ENCODE measurements at regions of chr17 and their contacts with region 1.

Region 1: DNA sequence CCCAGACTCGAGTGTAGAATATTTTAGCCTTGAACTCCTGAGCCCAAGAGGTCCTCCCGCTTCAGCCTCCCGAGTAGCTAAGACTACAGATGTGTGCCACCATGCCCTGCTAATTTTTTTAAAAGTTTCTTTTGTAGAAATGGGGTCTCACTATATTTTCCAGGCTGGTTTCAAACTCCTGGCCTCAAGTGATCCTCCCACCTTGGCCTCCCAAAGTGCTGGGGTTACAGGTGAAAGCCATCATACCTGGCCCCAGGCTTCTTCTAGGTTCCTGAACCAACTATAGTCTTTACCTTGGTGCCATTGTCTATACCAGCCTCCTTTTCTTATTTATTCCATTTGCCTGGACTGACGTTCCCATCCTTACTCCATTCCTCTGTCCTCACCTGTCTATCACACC is 17.1 kb upstream of the PRKAR1A start:
- DNase-seq: no peak
- ATAC-seq: no peak
- H3K4me3 ChIP-seq: no peak overlapping the region
- H3K27ac ChIP-seq: no peak overlapping the region
- H3K4me1 ChIP-seq: peaks cover 0 to 9% of the 10 kb centered on the region in 2 experiments; a peak in 2 of 4 replicates
- H3K27me3 ChIP-seq: no peaks in the 10 kb centered on the region
- CTCF ChIP-seq: no peak
- POLR2A ChIP-seq: no peak
- RAD21 ChIP-seq: no peak

Region 2: DNA sequence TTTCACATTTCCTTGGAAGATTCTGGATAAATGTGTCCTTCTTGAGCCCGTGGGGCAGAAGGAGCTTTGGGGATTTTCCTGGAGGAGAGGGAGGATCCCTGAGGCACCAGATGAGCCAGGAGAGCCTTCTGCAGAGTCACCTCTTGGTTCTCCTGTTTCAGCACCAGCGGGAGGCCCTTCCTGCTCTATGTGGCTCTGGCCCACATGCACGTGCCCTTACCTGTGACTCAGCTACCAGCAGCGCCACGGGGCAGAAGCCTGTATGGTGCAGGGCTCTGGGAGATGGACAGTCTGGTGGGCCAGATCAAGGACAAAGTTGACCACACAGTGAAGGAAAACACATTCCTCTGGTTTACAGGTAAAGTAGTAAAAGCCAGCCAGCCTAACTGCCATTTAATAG is 126.7 kb before region 1 on chr17:
- CTCF ChIA-PET with region 1: no interaction called
- POLR2A ChIA-PET with region 1: no interaction called
- RAD21 ChIA-PET with region 1: no interaction called
- intact Hi-C with region 1: no loop called
- DNase-seq: no peak
- ATAC-seq: peak; percentile 59
- H3K4me3 ChIP-seq: no peak overlapping the region
- H3K27ac ChIP-seq: no peak overlapping the region
- H3K4me1 ChIP-seq: peaks cover 0 to 8% of the 10 kb centered on the region in 2 experiments; a peak in 1 of 4 replicates
- H3K27me3 ChIP-seq: no peaks in the 10 kb centered on the region
- CTCF ChIP-seq: no peak
- POLR2A ChIP-seq: no peak
- RAD21 ChIP-seq: no peak

Region 3: GRCh38 chr17:68391561-68392268 is 103.4 kb before region 1 on chr17:
- CTCF ChIA-PET with region 1: no interaction called
- POLR2A ChIA-PET with region 1: no interaction called
- RAD21 ChIA-PET with region 1: no interaction called
- intact Hi-C with region 1: no loop called
- DNase-seq: no peak
- ATAC-seq: no peak
- H3K4me3 ChIP-seq: no peak overlapping the region
- H3K27ac ChIP-seq: no peak overlapping the region
- H3K4me1 ChIP-seq: peaks cover 25 to 34% of the 10 kb centered on the region in 2 experiments
- H3K27me3 ChIP-seq: no peaks in the 10 kb centered on the region
- CTCF ChIP-seq: no peak
- POLR2A ChIP-seq: no peak
- RAD21 ChIP-seq: no peak

Region 4: GRCh38 chr17:68511671-68512246 is 16.7 kb after region 1 on chr17:
- CTCF ChIA-PET with region 1: interaction called, 3 read pairs
- POLR2A ChIA-PET with region 1: interaction called, 3 read pairs
- RAD21 ChIA-PET with region 1: no interaction called
- intact Hi-C with region 1: loop called (anchors 1 kb)
- DNase-seq: peak; percentile 80
- ATAC-seq: peak; percentile 73
- H3K4me3 ChIP-seq: peak overlapping the region; percentile 85 to 88
- H3K27ac ChIP-seq: peak overlapping the region; percentile 86
- H3K4me1 ChIP-seq: peaks cover 15 to 35% of the 10 kb centered on the region in 2 experiments
- H3K27me3 ChIP-seq: no peaks in the 10 kb centered on the region
- CTCF ChIP-seq: no peak; a peak in 1 of 6 replicates
- POLR2A ChIP-seq: no peak
- RAD21 ChIP-seq: no peak

Region 5: GRCh38 chr17:68627956-68628575 is 133.0 kb after region 1 on chr17:
- CTCF ChIA-PET with region 1: no interaction called
- POLR2A ChIA-PET with region 1: no interaction called
- RAD21 ChIA-PET with region 1: no interaction called
- intact Hi-C with region 1: no loop called
- DNase-seq: no peak
- ATAC-seq: peak; percentile 63; the same call in 1 of the 2 replicates
- H3K4me3 ChIP-seq: no peak overlapping the region
- H3K27ac ChIP-seq: no peak overlapping the region
- H3K4me1 ChIP-seq: no peaks in the 10 kb centered on the region
- H3K27me3 ChIP-seq: no peaks in the 10 kb centered on the region
- CTCF ChIP-seq: no peak
- POLR2A ChIP-seq: no peak
- RAD21 ChIP-seq: no peak